Dorsolateral prefrontal cortex (tissue), 120 donors: ENCODE measurements at regions of chr20 and their contacts with region 1.

Region 1: GRCh38 chr20:49982346-49983122 is at the start of gene SNAI1:
- DNase-seq: peak; percentile 66 to 89 (median 80)
- H3K4me3 ChIP-seq: peak within 1 kb of the TSS; percentile 25 to 83 (median 69)
- H3K27ac ChIP-seq: peak within 1 kb of the TSS in 48 of 59 donors; percentile 0 to 91 (median 69)
- H3K27me3 ChIP-seq: no peaks in the 10 kb centered on the region
- CTCF ChIP-seq: peak in 53 of 56 donors; percentile 25 to 83 (median 55)
- total RNA-seq, gene SNAI1: 0.39 to 6.9 (median 1.8) TPM in 119 of 120 experiments, not detected in the other

Region 2: GRCh38 chr20:49490702-49491110 is 491.8 kb before region 1 on chr20:
- intact Hi-C with region 1: no loop called
- DNase-seq: no peak
- H3K4me3 ChIP-seq: no peak overlapping the region
- H3K27ac ChIP-seq: no peak overlapping the region
- H3K27me3 ChIP-seq: peaks cover 0 to 6% (median 0%) of the 10 kb centered on the region in 45 donors
- CTCF ChIP-seq: no peak

Region 3: DNA sequence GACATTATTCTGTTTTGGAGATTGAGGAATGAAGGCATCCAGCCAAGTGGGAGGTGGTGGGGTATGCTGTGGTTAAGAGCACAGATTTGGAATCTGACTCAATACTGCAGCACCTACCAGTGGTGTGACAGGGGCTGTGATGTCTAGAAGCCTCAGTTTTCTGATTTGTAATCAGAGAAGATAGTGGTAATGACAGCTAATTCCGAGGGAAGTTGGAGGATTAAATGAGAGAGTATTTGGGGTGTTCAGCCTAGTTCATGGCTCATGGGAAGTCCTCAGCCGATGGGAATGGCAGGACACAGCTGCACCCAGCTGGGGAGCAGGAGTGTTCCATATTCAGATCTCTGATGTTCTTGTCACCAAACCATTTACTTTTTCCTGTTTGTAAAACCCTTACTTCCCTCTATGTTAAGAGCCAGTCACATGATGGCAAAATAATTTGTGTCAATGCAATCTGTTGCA is 160.6 kb before region 1 on chr20:
- intact Hi-C with region 1: no loop called
- DNase-seq: no peak
- H3K4me3 ChIP-seq: no peak overlapping the region
- H3K27ac ChIP-seq: peak overlapping the region in 1 of 59 donors; percentile 4
- H3K27me3 ChIP-seq: no peaks in the 10 kb centered on the region
- CTCF ChIP-seq: no peak

Region 4: DNA sequence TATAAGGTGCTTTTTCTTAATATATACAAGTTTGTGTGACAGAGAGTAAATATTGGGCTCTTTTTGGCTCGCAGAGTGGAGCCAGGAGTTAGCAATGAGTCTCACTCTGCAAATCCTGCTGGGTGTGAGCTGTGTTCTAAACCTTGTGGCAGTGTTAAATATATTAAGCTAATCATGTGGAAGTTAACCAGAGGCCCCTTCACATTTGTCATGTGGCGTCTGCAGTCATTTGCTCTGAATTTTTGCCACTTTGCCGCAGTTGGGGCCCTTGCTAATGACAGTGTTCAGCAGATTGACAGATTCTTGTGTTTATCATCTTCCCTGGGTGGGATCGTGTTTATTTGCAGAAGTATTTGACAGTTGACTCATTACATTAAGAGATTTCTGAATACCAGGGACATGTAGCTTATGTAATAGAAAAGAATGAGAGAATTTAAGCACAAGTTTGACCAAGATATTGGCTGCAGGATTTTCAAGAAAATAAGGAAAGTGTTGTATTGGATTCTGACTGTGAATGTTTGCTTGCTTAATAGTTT is 105.1 kb before region 1 on chr20:
- intact Hi-C with region 1: no loop called
- DNase-seq: no peak
- H3K4me3 ChIP-seq: no peak overlapping the region
- H3K27ac ChIP-seq: peak overlapping the region in 5 of 59 donors; percentile 7 to 31 (median 12)
- H3K27me3 ChIP-seq: no peaks in the 10 kb centered on the region
- CTCF ChIP-seq: no peak

Region 5: GRCh38 chr20:50027611-50028105 is 45.1 kb after region 1 on chr20:
- intact Hi-C with region 1: loop called in 1 of 2 experiments (anchors 5 kb)
- DNase-seq: peak in 9 of 10 donors; percentile 54 to 82 (median 76)
- H3K4me3 ChIP-seq: no peak overlapping the region
- H3K27ac ChIP-seq: peak overlapping the region in 3 of 59 donors; percentile 10 to 59 (median 28)
- H3K27me3 ChIP-seq: no peaks in the 10 kb centered on the region
- CTCF ChIP-seq: no peak

Region 6: GRCh38 chr20:50070991-50071888 is 88.7 kb after region 1 on chr20:
- intact Hi-C with region 1: loop called (anchors 1 kb)
- DNase-seq: peak; percentile 81 to 95 (median 86)
- H3K4me3 ChIP-seq: peak overlapping the region; percentile 39 to 75 (median 58)
- H3K27ac ChIP-seq: peak overlapping the region in 19 of 59 donors; percentile 10 to 84 (median 59)
- H3K27me3 ChIP-seq: no peaks in the 10 kb centered on the region
- CTCF ChIP-seq: peak; percentile 96 to 100 (median 100)

Region 7: GRCh38 chr20:50085452-50086365 is 103.2 kb after region 1 on chr20:
- intact Hi-C with region 1: loop called in 1 of 2 experiments (anchors 5 kb)
- DNase-seq: peak in 5 of 10 donors; percentile 41 to 52 (median 45)
- H3K4me3 ChIP-seq: peak overlapping the region in 29 of 59 donors; percentile 1 to 40 (median 22)
- H3K27ac ChIP-seq: peak overlapping the region in 36 of 59 donors; percentile 1 to 67 (median 29)
- H3K27me3 ChIP-seq: no peaks in the 10 kb centered on the region
- CTCF ChIP-seq: peak; percentile 62 to 86 (median 76)

Region 8: DNA sequence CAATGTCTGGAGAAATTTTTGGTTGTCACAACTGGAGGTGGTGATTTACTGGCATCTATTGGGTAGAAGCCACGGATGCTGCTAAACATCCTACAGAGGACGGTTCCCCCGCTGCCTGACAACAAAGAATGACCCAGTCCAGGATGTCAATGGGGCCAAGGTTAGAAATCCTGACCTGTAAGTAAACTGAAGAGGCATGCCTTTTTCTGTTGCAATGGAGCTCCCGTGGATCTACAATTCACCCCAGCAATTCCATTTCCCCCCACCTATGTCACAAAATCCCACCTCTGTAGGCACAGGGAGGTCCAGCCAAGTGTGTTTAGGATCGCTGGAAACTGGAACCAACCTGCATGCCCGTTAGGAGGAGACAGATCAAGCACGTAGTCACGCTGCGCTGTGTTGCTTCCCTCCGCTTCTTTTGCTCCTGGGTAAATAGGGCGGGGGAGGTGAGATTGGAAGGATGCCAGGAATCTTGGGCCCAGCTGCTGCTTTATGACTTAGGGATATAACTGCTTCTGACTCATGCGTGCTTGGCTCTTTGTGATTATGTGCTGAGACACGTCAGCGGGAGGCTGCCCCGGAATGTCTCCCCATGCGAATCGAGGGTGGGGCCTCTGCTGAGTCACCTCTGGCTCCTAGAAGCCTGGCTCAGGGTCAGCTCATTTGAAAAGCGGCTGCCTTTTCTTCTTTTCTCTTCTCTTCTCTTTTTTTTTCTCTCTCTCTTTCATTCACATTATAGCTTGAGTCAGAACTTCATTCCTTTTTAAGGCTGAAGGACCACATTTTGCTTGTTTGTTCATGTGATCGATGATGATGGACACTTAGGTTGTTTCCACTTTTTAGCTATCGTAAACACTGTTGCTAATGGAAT is 183.4 kb after region 1 on chr20:
- intact Hi-C with region 1: loop called (anchors 5 to 10 kb)
- DNase-seq: peak; percentile 34 to 97 (median 88)
- H3K4me3 ChIP-seq: peak overlapping the region; percentile 3 to 65 (median 38)
- H3K27ac ChIP-seq: peak overlapping the region in 57 of 59 donors; percentile 29 to 93 (median 85)
- H3K27me3 ChIP-seq: no peaks in the 10 kb centered on the region
- CTCF ChIP-seq: peak in 10 of 56 donors; percentile 9 to 37 (median 24)

Region 9: GRCh38 chr20:50172347-50173013 is 189.9 kb after region 1 on chr20:
- intact Hi-C with region 1: loop called (anchors 5 to 10 kb)
- DNase-seq: peak in 6 of 10 donors; percentile 39 to 69 (median 56)
- H3K4me3 ChIP-seq: peak overlapping the region; percentile 40 to 78 (median 63)
- H3K27ac ChIP-seq: peak overlapping the region in 49 of 59 donors; percentile 6 to 89 (median 64)
- H3K27me3 ChIP-seq: no peaks in the 10 kb centered on the region
- CTCF ChIP-seq: peak in 1 of 56 donors; percentile 24